ENCODE measurements at regions of chr16 and their contacts with region 1.

Region 1: DNA sequence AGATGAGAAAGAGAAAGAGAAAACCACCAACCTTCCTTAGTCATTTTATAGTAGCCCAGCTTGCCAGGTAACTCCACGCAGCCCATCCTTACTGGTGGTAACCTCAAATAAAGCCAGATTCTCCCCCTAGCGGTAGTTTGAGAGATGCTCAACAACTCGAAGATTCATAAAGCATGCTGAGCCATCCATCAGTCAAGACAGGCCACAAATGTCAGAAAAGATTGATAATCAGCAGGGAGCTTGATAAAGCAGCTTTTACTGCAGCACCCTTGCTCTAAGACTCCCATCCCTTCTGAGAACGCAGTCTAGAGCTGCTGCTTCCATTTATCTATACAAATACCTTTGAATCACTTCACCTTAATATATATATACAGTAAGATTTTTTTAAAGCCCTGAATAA is 451.5 kb upstream of the HSBP1 start:
- DNase-seq: peak in 1 of 2 donors; percentile 22
- ATAC-seq: peak; percentile 77 to 79
- H3K4me3 ChIP-seq: no peak overlapping the region
- H3K27ac ChIP-seq: no peak overlapping the region
- H3K4me1 ChIP-seq: peaks cover 9 to 22% of the 10 kb centered on the region in 2 donors
- H3K27me3 ChIP-seq: no peaks in the 10 kb centered on the region
- CTCF ChIP-seq: peak; percentile 17 to 69 (median 63)
- POLR2A ChIP-seq: no peak

Region 2: GRCh38 chr16:82755569-82756282 is 600.5 kb before region 1 on chr16:
- in situ Hi-C with region 1: no loop called
- intact Hi-C with region 1: loop called (anchors 10 kb)
- DNase-seq: no peak
- ATAC-seq: no peak
- H3K4me3 ChIP-seq: no peak overlapping the region
- H3K27ac ChIP-seq: peak overlapping the region; percentile 3 to 61 (median 39)
- H3K4me1 ChIP-seq: peaks cover 33% of the 10 kb centered on the region in 2 donors
- H3K27me3 ChIP-seq: no peaks in the 10 kb centered on the region
- CTCF ChIP-seq: no peak
- POLR2A ChIP-seq: no peak

Region 3: GRCh38 chr16:83113317-83113716 is 242.9 kb before region 1 on chr16:
- in situ Hi-C with region 1: no loop called
- intact Hi-C with region 1: loop called (anchors 10 kb)
- DNase-seq: no peak
- ATAC-seq: no peak
- H3K4me3 ChIP-seq: no peak overlapping the region
- H3K27ac ChIP-seq: no peak overlapping the region
- H3K4me1 ChIP-seq: peaks cover 15 to 25% of the 10 kb centered on the region in 2 donors
- H3K27me3 ChIP-seq: no peaks in the 10 kb centered on the region
- CTCF ChIP-seq: peak in 3 of 5 experiments; percentile 22 to 37 (median 34)
- POLR2A ChIP-seq: no peak

Region 4: GRCh38 chr16:83200005-83200779 is 156.1 kb before region 1 on chr16:
- in situ Hi-C with region 1: no loop called
- intact Hi-C with region 1: loop called (anchors 10 kb)
- DNase-seq: peak in 1 of 2 donors; percentile 15
- ATAC-seq: peak in 1 of 2 donors; percentile 42
- H3K4me3 ChIP-seq: no peak overlapping the region
- H3K27ac ChIP-seq: no peak overlapping the region
- H3K4me1 ChIP-seq: no peaks in the 10 kb centered on the region
- H3K27me3 ChIP-seq: no peaks in the 10 kb centered on the region
- CTCF ChIP-seq: peak in 2 of 5 experiments; percentile 27 to 31
- POLR2A ChIP-seq: no peak

Region 5: DNA sequence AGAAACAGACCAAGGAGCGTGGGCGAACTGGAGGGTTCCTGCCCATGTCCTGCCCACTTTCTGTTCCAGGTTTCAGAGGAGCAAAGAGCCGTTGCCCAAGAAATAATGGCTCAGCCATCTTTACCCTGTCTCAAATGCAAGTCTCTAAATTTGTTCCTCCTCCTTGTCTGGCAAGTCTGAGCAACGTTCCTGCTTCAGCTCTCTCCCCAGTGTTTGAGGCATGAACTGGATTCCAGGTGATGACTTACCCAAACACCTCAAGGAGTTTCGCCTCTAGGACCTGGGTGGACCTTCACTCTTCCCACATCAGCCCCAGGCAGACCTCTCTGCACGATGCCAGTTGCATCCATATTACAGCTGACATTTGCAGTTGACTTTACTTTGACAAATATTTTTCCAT is 70.3 kb before region 1 on chr16:
- in situ Hi-C with region 1: no loop called
- intact Hi-C with region 1: no loop called
- DNase-seq: no peak
- ATAC-seq: no peak
- H3K4me3 ChIP-seq: no peak overlapping the region
- H3K27ac ChIP-seq: no peak overlapping the region
- H3K4me1 ChIP-seq: no peaks in the 10 kb centered on the region
- H3K27me3 ChIP-seq: no peaks in the 10 kb centered on the region
- CTCF ChIP-seq: no peak
- POLR2A ChIP-seq: no peak

Region 6: DNA sequence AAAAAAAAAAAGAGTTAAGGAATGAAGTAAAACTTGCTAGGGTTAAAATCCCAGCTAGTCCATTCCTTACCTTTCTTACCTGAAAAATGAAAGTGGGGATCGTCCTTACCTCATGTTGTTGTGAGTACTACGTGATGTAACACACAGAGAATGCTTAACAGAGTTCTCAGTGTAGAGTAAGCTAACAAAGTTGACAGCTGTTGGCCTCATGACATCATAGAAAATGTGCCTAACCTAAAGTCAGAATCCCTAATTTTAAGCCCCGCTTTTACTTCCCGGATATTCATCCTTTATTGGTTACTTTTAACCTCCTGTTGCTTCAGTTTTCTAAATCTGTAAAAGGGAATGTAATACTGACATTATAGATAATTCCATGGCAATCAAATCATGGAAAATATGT is 54.3 kb before region 1 on chr16:
- in situ Hi-C with region 1: no loop called
- intact Hi-C with region 1: loop called (anchors 2 kb)
- DNase-seq: no peak
- ATAC-seq: no peak
- H3K4me3 ChIP-seq: no peak overlapping the region
- H3K27ac ChIP-seq: no peak overlapping the region
- H3K4me1 ChIP-seq: peaks cover 0 to 8% of the 10 kb centered on the region in 2 donors
- H3K27me3 ChIP-seq: no peaks in the 10 kb centered on the region
- CTCF ChIP-seq: no peak
- POLR2A ChIP-seq: no peak

Region 7: DNA sequence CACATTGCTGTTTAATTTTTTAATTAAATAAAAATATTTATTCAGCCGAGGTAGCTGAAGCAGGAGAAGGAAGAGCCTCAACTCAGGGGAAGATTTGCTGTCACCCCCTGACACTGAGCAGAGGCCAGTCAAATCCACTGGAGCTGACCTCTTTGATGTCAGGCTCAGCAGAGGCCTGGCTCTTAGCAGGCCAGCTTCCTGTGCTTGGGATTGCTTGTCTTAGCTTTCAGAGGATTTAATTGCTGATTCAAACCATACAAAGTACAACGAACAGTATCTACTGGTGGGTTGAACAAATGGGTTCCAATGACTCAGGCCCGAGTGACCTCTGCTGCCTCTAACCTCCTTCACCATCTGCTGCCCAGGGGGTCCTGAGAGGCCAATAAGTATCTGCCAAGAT is 34.5 kb after region 1 on chr16:
- in situ Hi-C with region 1: no loop called
- intact Hi-C with region 1: no loop called
- DNase-seq: no peak
- ATAC-seq: no peak
- H3K4me3 ChIP-seq: no peak overlapping the region
- H3K27ac ChIP-seq: no peak overlapping the region
- H3K4me1 ChIP-seq: peaks cover 0 to 5% of the 10 kb centered on the region in 2 donors
- H3K27me3 ChIP-seq: no peaks in the 10 kb centered on the region
- CTCF ChIP-seq: no peak
- POLR2A ChIP-seq: no peak

Measured in gastrocnemius medialis (tissue), 4 donors.